PC-9 (cell line): ENCODE measurements at regions of chr17 and their contacts with region 1.

Region 1: GRCh38 chr17:32783602-32784001 is 93.3 kb downstream of the MYO1D start:
- DNase-seq: peak in 1 of 2 experiments; percentile 54
- H3K4me3 ChIP-seq: no peak overlapping the region
- H3K27ac ChIP-seq: no peak overlapping the region
- H3K4me1 ChIP-seq: no peaks in the 10 kb centered on the region
- H3K27me3 ChIP-seq: no peaks in the 10 kb centered on the region
- CTCF ChIP-seq: peak; percentile 85

Region 2: GRCh38 chr17:32835291-32835761 is 51.7 kb after region 1 on chr17:
- CTCF ChIA-PET with region 1: no interaction called
- POLR2A ChIA-PET with region 1: no interaction called
- intact Hi-C with region 1: no loop called
- DNase-seq: no peak
- H3K4me3 ChIP-seq: no peak overlapping the region
- H3K27ac ChIP-seq: no peak overlapping the region
- H3K4me1 ChIP-seq: no peaks in the 10 kb centered on the region
- H3K27me3 ChIP-seq: no peaks in the 10 kb centered on the region
- CTCF ChIP-seq: no peak

Region 3: DNA sequence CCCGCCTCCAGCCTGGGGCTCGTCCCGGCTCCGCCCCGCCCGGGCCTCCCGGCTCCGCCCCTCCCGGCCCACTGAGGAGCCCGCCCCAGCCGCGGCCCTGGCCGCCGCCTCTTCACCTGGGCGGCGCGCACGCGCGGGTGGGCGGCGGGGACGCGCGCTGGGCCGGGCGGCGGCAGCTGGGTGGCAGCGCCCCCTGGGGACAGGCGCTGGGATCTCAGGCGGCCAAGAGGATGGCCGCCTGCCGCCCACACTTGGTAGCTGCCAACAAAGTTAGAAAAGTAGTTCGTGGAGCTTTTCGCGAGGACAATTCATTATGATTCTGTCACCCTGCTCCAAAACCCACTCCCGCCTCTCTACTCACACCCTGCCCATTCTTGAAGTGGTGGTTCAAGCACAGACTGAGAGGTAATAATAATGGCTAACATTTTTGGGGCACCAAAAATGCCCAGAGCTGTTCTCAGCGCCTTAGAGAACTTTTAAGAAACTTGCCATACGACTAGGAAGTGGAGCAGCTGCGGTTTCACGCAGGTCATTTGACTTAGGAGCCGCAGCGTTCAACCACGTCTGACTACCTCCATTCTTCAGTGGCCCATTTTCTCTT is 93.7 kb after region 1 on chr17:
- CTCF ChIA-PET with region 1: interaction called, 40 read pairs
- POLR2A ChIA-PET with region 1: no interaction called
- intact Hi-C with region 1: loop called (anchors 1 kb)
- DNase-seq: peak; percentile 60 to 96
- H3K4me3 ChIP-seq: peak overlapping the region; percentile 86; the same call in 1 of the 2 replicates
- H3K27ac ChIP-seq: no peak overlapping the region
- H3K4me1 ChIP-seq: peaks cover 14% of the 10 kb centered on the region
- H3K27me3 ChIP-seq: no peaks in the 10 kb centered on the region
- CTCF ChIP-seq: peak; percentile 66

Region 4: DNA sequence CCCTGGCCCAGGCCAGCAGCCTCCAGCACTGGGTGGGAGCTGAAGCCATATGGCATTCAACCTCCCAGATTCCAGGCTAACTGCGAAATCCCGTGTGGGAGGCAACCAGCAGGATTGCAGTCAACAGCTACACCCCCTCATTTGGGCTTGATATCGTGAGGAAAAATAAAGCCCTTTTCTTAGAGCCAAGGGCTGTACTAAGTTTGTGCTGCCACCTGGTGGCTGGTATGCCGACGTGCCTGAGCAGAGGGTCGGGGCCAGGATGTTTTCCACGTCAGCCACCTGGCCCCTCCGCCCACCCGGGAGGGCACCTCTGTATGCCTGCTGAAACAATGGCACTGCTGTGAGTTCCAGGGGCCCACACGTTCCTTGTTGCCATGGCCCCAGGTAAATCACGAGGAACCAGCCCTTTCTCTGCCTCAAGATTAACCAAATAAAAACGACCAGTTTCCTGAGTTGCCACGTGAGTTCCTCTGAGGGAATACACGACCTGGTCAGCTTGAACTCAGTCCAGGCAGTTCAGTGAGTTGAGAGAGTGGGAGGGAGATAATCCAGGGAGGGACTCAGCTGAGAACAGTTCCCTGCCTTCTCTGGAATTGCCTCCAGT is 153.4 kb after region 1 on chr17:
- CTCF ChIA-PET with region 1: interaction called, 4 read pairs
- POLR2A ChIA-PET with region 1: no interaction called
- intact Hi-C with region 1: loop called (anchors 5 kb)
- DNase-seq: peak in 1 of 2 experiments; percentile 51
- H3K4me3 ChIP-seq: no peak overlapping the region
- H3K27ac ChIP-seq: no peak overlapping the region
- H3K4me1 ChIP-seq: no peaks in the 10 kb centered on the region
- H3K27me3 ChIP-seq: peaks cover 53% of the 10 kb centered on the region
- CTCF ChIP-seq: peak; percentile 90

Region 5: DNA sequence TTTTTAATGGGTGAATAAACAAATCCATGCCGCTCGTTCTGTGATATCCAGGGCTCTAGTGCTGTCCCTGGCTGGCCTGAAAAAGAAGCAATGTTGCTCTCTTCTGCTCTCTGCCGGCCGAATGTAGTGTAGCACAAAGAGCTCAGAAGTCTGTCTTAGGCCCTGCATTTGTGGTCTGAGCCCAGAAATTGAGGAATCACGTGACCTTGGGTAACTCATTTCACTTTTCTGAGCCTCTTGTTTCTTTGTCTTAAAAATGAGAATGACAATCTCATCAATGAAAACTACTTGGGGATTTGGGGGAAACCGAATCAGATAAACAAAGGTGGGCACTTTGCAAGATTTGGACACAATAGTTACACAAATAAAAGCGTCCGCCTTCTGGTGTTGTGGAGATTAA is 891.1 kb after region 1 on chr17:
- CTCF ChIA-PET with region 1: no interaction called
- POLR2A ChIA-PET with region 1: no interaction called
- intact Hi-C with region 1: loop called (anchors 10 kb)
- DNase-seq: peak in 1 of 2 experiments; percentile 37
- H3K4me3 ChIP-seq: no peak overlapping the region
- H3K27ac ChIP-seq: no peak overlapping the region
- H3K4me1 ChIP-seq: no peaks in the 10 kb centered on the region
- H3K27me3 ChIP-seq: no peaks in the 10 kb centered on the region
- CTCF ChIP-seq: peak; percentile 73